ENCODE measurements at regions of chr21 and their contacts with region 1.

Region 1: DNA sequence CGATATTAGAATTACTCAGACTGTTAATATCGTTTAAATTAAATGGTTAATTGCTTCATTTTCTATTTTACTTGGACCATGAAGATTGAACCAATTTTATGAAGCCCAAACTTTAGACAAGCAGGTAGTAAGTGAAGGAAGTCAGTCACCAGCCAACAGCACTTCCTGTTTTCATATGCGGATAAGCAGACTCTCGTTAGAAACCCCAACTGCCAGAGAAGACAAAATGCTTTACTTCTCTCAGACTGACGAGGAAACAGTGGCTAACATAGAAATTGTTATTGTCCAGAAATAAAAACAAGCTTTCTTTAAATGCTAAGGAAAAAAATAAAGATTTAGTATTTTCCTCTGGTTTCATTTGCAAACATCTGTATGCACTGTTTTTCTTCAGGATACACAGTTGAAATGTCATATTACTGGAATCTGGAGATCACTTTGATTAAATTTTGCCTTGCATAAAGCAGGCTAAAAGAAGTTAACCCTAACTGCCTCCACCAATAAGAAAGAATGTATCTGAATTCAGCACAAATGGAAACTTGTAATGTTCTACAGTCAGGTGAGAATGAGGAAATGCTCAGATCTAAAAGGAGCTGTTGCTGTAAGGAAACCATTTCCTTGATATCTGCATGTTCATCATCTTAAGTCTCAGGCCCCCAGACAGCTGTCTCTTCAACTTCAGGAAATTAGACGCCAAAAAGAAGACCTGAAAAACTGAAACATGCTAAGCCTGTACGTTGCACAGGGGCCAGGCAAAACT is 129.8 kb upstream of the SAMSN1 start:
- DNase-seq: peak in 7 of 9 donors; percentile 52 to 78 (median 70)
- ATAC-seq: peak; percentile 90
- H3K4me3 ChIP-seq: peak overlapping the region; percentile 19
- H3K4me3 Mint-ChIP-seq: peak overlapping the region; percentile 12 to 82 (median 78)
- H3K27ac ChIP-seq: peak overlapping the region; percentile 68
- H3K27ac Mint-ChIP-seq: peak overlapping the region; percentile 94 to 100 (median 98)
- H3K4me1 ChIP-seq: peaks cover 21 to 28% of the 10 kb centered on the region in 2 donors
- H3K4me1 Mint-ChIP-seq: peaks cover 32 to 68% (median 60%) of the 10 kb centered on the region in 7 donors
- H3K27me3 ChIP-seq: no peaks in the 10 kb centered on the region
- H3K27me3 Mint-ChIP-seq: no peaks in the 10 kb centered on the region

Region 2: DNA sequence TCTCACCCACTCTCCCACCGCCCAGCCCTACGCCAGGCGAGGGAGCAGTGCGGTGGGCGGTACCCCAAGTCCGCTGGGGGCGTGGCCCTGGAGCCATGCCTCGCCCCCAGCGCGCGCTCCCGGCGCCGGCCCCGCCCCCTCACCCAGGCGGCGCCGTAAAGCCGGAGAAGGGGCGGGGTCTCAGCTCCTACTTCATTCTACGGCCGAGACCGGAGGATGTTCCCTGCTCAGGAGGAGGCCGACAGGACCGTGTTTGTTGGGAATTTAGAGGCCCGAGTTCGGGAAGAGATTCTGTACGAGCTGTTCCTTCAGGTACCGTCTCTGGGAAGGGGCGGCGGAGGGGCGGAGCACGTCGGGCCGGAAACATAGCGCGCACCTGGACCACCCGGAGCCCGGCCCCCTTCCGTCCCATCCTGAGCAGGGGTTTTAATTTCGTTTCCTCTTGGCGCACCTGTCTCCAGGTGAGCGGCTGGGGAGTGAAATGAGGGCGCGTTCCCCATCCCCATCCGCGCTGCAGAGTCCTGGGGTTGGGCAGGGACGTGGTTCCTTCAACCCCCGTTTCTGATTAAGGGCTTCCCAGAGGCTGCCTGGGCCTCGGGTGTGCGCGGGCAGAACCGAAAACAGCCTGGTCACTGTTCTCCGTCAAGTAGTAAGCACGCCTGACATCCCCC is 459.8 kb before region 1 on chr21 and contains the start of gene RBM11:
- CTCF ChIA-PET with region 1: no interaction called
- POLR2A ChIA-PET with region 1: no interaction called
- intact Hi-C with region 1: loop called in 1 of 2 experiments (anchors 10 kb)
- DNase-seq: peak; percentile 69 to 88 (median 82)
- ATAC-seq: peak; percentile 99
- H3K4me3 ChIP-seq: peak within 1 kb of the TSS; percentile 80
- H3K4me3 Mint-ChIP-seq: peak within 1 kb of the TSS; percentile 86 to 93 (median 90)
- H3K27ac ChIP-seq: peak within 1 kb of the TSS; percentile 77
- H3K27ac Mint-ChIP-seq: peak within 1 kb of the TSS in 8 of 9 donors; percentile 61 to 88 (median 82)
- H3K4me1 ChIP-seq: peaks cover 0 to 8% of the 10 kb centered on the region in 2 donors
- H3K4me1 Mint-ChIP-seq: peaks cover 0 to 10% (median 8%) of the 10 kb centered on the region in 7 donors
- H3K27me3 ChIP-seq: no peaks in the 10 kb centered on the region
- H3K27me3 Mint-ChIP-seq: peaks cover 4 to 26% (median 8%) of the 10 kb centered on the region in 5 donors
- total RNA-seq, gene RBM11: 0.46 to 19.3 (median 4.9) TPM

Region 3: DNA sequence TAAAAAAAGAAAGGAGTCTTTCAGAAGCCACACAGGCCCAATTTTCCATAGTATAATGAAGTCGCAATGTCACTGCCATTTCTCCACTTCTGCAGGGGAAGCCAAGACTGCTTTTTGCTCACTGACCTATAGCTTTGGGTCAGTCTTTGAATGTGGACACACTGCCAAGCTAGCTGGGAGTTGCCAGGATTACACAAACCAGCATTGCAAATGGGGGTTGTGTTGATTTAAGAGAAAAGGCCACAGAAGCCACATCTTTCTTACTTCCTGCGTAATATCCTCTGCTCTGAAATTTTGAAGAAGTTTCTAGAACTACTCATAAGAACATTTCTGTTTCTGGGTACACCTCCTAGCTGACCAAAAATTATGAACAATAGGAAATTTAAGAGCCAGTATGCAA is 84.1 kb before region 1 on chr21:
- CTCF ChIA-PET with region 1: no interaction called
- POLR2A ChIA-PET with region 1: no interaction called
- intact Hi-C with region 1: loop called in 1 of 2 experiments (anchors 5 kb)
- DNase-seq: peak in 4 of 9 donors; percentile 6 to 24 (median 11)
- ATAC-seq: peak; percentile 91
- H3K4me3 ChIP-seq: no peak overlapping the region
- H3K4me3 Mint-ChIP-seq: peak overlapping the region in 3 of 10 donors; percentile 3 to 70 (median 22)
- H3K27ac ChIP-seq: no peak overlapping the region
- H3K27ac Mint-ChIP-seq: peak overlapping the region in 4 of 9 donors; percentile 4 to 90 (median 33)
- H3K4me1 ChIP-seq: peaks cover 3 to 11% of the 10 kb centered on the region in 2 donors
- H3K4me1 Mint-ChIP-seq: peaks cover 8 to 43% (median 15%) of the 10 kb centered on the region in 7 donors
- H3K27me3 ChIP-seq: no peaks in the 10 kb centered on the region
- H3K27me3 Mint-ChIP-seq: no peaks in the 10 kb centered on the region

Region 4: DNA sequence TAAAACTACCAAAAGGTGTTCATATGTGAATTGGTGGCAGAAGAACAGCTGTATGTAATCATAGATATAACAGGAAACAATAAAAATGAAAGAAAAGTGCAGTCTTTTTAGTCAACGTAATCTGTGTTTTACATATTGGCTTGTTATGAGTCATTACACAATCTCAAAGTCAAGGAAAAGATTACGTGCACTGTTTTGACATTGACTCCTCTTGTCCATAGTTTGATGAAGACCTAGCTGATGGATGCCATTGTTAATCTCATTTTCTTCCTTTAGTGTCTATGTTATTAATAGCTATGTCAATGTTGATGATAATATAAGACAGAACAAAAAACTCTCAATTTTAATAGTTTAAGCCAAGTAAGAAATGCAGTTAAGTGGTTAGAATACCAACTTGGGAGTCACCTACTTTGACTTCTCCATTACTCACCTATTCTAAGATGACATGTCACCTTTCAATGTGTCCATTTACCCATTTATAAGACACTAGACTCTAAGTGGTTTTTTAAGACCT is 45.3 kb before region 1 on chr21:
- CTCF ChIA-PET with region 1: no interaction called
- POLR2A ChIA-PET with region 1: no interaction called
- intact Hi-C with region 1: loop called (anchors 1 to 2 kb)
- DNase-seq: peak in 2 of 9 donors; percentile 7 to 10
- ATAC-seq: peak; percentile 41
- H3K4me3 ChIP-seq: no peak overlapping the region
- H3K4me3 Mint-ChIP-seq: peak overlapping the region in 3 of 10 donors; percentile 11 to 30 (median 12)
- H3K27ac ChIP-seq: no peak overlapping the region
- H3K27ac Mint-ChIP-seq: peak overlapping the region in 6 of 9 donors; percentile 20 to 72 (median 46)
- H3K4me1 ChIP-seq: no peaks in the 10 kb centered on the region
- H3K4me1 Mint-ChIP-seq: peaks cover 7 to 34% (median 18%) of the 10 kb centered on the region in 7 donors
- H3K27me3 ChIP-seq: no peaks in the 10 kb centered on the region
- H3K27me3 Mint-ChIP-seq: peaks cover 0 to 7% (median 0%) of the 10 kb centered on the region in 5 donors

Region 5: DNA sequence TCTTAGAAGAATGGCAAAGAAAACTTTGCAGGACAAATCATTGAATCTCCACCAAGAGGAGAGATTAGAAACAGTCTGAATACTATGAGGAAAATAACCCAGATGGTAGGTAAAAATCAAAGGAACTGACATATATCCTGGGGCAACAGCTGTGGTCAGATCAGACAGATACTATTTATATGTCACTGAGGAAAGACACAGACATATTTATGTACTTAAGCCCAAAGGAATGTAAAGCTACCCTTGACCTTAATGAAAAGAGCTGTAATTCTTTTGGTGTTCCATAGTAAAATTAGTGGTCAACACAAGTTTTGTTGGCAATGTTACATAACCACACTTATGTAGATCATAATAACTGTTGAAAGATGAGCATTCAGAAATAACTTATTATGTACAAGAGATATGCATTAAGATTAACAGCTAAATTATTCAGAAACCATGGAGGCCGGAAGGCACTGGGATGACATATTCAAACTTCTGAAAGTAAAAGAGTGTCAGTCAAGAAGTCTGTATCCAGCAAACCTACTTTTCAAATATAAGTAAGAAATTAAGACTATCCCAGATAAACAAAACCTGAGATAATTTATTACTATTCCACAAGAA is 36.3 kb after region 1 on chr21:
- CTCF ChIA-PET with region 1: no interaction called
- POLR2A ChIA-PET with region 1: interaction called, 4 read pairs
- intact Hi-C with region 1: loop called in 1 of 2 experiments (anchors 5 kb)
- DNase-seq: no peak
- ATAC-seq: no peak
- H3K4me3 ChIP-seq: no peak overlapping the region
- H3K4me3 Mint-ChIP-seq: no peak overlapping the region
- H3K27ac ChIP-seq: no peak overlapping the region
- H3K27ac Mint-ChIP-seq: no peak overlapping the region
- H3K4me1 ChIP-seq: no peaks in the 10 kb centered on the region
- H3K4me1 Mint-ChIP-seq: peaks cover 0 to 11% (median 0%) of the 10 kb centered on the region in 7 donors
- H3K27me3 ChIP-seq: no peaks in the 10 kb centered on the region
- H3K27me3 Mint-ChIP-seq: no peaks in the 10 kb centered on the region

Region 6: DNA sequence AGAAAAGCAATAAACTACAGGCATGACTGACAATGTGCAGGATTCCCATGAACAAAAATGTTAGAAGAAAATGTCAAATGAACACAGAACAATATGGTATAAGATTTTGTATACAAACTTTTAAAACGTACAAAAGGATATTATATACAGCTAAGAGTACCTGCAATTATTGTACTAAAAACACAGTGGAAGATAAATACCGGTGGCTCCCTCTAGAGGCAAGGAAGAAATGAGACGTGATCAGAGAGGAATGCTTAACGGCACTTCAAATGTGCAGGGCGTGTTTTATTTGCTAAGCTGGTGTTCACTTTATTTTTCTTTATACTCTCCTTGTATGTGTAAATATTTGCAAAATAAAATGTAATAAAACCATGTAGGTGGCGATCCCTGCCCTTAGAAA is 62.0 kb after region 1 on chr21:
- CTCF ChIA-PET with region 1: interaction called, 4 read pairs
- POLR2A ChIA-PET with region 1: interaction called, 3 read pairs
- intact Hi-C with region 1: loop called in 1 of 2 experiments (anchors 2 kb)
- DNase-seq: peak in 7 of 9 donors; percentile 54 to 80 (median 72)
- ATAC-seq: peak; percentile 94
- H3K4me3 ChIP-seq: no peak overlapping the region
- H3K4me3 Mint-ChIP-seq: peak overlapping the region in 1 of 10 donors; percentile 23
- H3K27ac ChIP-seq: no peak overlapping the region
- H3K27ac Mint-ChIP-seq: peak overlapping the region in 1 of 9 donors; percentile 7
- H3K4me1 ChIP-seq: peaks cover 0 to 6% of the 10 kb centered on the region in 2 donors
- H3K4me1 Mint-ChIP-seq: peaks cover 0 to 43% (median 8%) of the 10 kb centered on the region in 7 donors
- H3K27me3 ChIP-seq: no peaks in the 10 kb centered on the region
- H3K27me3 Mint-ChIP-seq: peaks cover 0 to 5% (median 3%) of the 10 kb centered on the region in 5 donors

Region 7: GRCh38 chr21:14901482-14901958 is 225.6 kb after region 1 on chr21:
- CTCF ChIA-PET with region 1: no interaction called
- POLR2A ChIA-PET with region 1: no interaction called
- intact Hi-C with region 1: no loop called
- DNase-seq: no peak
- ATAC-seq: peak; percentile 37
- H3K4me3 ChIP-seq: no peak overlapping the region
- H3K4me3 Mint-ChIP-seq: no peak overlapping the region
- H3K27ac ChIP-seq: no peak overlapping the region
- H3K27ac Mint-ChIP-seq: no peak overlapping the region
- H3K4me1 ChIP-seq: no peaks in the 10 kb centered on the region
- H3K4me1 Mint-ChIP-seq: peaks cover 0 to 7% (median 0%) of the 10 kb centered on the region in 7 donors
- H3K27me3 ChIP-seq: no peaks in the 10 kb centered on the region
- H3K27me3 Mint-ChIP-seq: no peaks in the 10 kb centered on the region

Region 8: DNA sequence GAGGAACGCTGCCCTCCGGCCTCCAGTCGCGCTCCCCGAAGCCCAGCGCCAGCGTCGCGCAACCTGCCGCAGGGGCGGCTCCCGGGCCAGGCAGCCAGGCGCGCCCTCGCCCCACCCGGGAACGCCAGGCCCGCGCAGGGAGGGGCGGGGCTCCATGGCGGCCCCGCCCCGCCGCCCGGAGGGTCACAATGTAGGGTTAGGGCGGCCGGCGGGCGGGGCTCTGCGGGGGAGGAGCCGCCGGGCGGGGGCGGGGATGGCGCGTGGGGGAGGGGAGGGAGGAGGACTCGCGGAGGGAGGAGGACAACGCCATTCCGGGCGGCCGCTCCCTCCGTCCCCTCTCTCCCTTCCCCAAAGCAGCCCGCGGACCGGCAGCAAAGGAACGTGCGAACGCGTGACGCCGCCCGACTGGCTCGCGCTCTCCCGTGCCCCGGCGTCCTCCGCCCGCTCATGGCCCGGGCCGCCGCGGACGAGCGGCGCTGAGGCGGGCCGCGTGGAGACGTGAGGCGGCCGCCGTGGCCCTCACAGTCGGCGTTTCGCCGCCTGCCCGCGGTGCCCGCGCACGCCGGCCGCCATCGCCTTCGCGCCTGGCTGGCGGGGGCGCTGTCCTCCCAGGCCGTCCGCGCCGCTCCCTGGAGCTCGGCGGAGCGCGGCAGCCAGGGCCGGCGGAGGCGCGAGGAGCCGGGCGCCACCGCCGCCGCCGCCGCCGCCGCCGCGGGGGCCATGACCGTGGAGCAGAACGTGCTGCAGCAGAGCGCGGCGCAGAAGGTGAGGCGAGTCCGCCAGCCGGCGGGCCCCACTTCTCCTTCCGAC is 1053.9 kb after region 1 on chr21 and contains the start of gene USP25:
- CTCF ChIA-PET with region 1: no interaction called
- POLR2A ChIA-PET with region 1: interaction called, 3 read pairs
- intact Hi-C with region 1: loop called in 1 of 2 experiments (anchors 5 kb)
- DNase-seq: peak; percentile 76 to 85 (median 82)
- ATAC-seq: peak; percentile 93
- H3K4me3 ChIP-seq: peak within 1 kb of the TSS; percentile 58
- H3K4me3 Mint-ChIP-seq: peak within 1 kb of the TSS; percentile 92 to 98 (median 97)
- H3K27ac ChIP-seq: peak within 1 kb of the TSS; percentile 83
- H3K27ac Mint-ChIP-seq: peak within 1 kb of the TSS; percentile 85 to 97 (median 94)
- H3K4me1 ChIP-seq: peaks cover 19 to 27% of the 10 kb centered on the region in 2 donors
- H3K4me1 Mint-ChIP-seq: peaks cover 9 to 45% (median 33%) of the 10 kb centered on the region in 7 donors
- H3K27me3 ChIP-seq: no peaks in the 10 kb centered on the region
- H3K27me3 Mint-ChIP-seq: peaks cover 0 to 33% (median 0%) of the 10 kb centered on the region in 5 donors
- total RNA-seq, gene USP25: 51.0 to 67.4 (median 56.5) TPM

Measured in naive thymus-derived CD4-positive, alpha-beta T cell (primary cell).